MCF 10A (cell line): ENCODE measurements at regions of chr5 and their contacts with region 1.

Region 1: GRCh38 chr5:90409318-90410177 is at the start of gene CETN3:
- DNase-seq: peak; percentile 95
- H3K4me3 Mint-ChIP-seq: no peak within 1 kb of the TSS
- H3K27ac Mint-ChIP-seq: no peak within 1 kb of the TSS
- H3K4me1 Mint-ChIP-seq: peaks cover 22% of the 10 kb centered on the region
- H3K27me3 Mint-ChIP-seq: no peaks in the 10 kb centered on the region
- CTCF ChIP-seq: no peak
- total RNA-seq, gene CETN3: 24.8 and 28.4 TPM in 2 replicates

Region 2: DNA sequence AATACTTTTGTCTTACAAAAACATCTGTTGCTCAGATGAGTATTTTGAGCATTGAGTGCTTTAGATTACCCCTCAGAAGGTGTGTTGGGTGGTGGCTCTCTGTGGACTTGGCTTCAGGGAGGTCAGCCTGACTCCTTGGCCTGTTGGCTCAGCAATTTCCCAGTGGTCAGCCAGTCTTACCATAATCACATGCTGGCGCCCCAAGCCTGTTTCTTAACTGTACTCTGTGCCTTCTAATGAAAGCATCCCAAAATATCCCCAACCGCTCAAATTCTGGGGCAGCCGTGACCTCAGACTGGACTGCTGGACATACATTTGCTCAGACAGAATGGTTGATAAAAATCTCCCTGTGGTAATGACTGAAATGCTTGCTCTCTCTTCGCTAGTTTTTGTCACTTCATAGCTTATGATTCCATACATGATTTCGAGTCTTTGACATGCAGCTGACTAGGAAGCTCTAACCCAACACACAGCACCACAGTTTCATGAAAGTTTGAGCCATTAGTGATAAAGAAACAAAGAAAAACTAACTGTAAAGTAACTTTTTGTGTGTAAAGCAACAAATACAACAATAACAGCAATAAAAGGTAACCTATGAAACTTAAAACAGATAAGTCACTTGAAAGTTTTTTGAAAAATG is 964.3 kb before region 1 on chr5:
- CTCF ChIA-PET with region 1: no interaction called
- POLR2A ChIA-PET with region 1: no interaction called
- intact Hi-C with region 1: no loop called
- DNase-seq: no peak
- H3K4me3 Mint-ChIP-seq: no peak overlapping the region
- H3K27ac Mint-ChIP-seq: no peak overlapping the region
- H3K4me1 Mint-ChIP-seq: peaks cover 5% of the 10 kb centered on the region
- H3K27me3 Mint-ChIP-seq: no peaks in the 10 kb centered on the region
- CTCF ChIP-seq: no peak

Region 3: GRCh38 chr5:90399251-90399650 is 10.3 kb before region 1 on chr5:
- CTCF ChIA-PET with region 1: no interaction called
- POLR2A ChIA-PET with region 1: interaction called, 23 read pairs
- intact Hi-C with region 1: no loop called
- DNase-seq: no peak
- H3K4me3 Mint-ChIP-seq: no peak overlapping the region
- H3K27ac Mint-ChIP-seq: no peak overlapping the region
- H3K4me1 Mint-ChIP-seq: peaks cover 11% of the 10 kb centered on the region
- H3K27me3 Mint-ChIP-seq: no peaks in the 10 kb centered on the region
- CTCF ChIP-seq: no peak

Region 4: GRCh38 chr5:90854169-90854568 is 444.6 kb after region 1 on chr5:
- CTCF ChIA-PET with region 1: no interaction called
- POLR2A ChIA-PET with region 1: no interaction called
- intact Hi-C with region 1: no loop called
- DNase-seq: no peak
- H3K4me3 Mint-ChIP-seq: no peak overlapping the region
- H3K27ac Mint-ChIP-seq: no peak overlapping the region
- H3K4me1 Mint-ChIP-seq: peaks cover 6% of the 10 kb centered on the region
- H3K27me3 Mint-ChIP-seq: no peaks in the 10 kb centered on the region
- CTCF ChIP-seq: no peak